Activated CD4-positive, alpha-beta T cell treated with anti-CD3 and anti-CD28 coated beads for 36 hours (primary cell): ENCODE measurements at regions of chr13 and their contacts with region 1.

Region 1: GRCh38 chr13:33542283-33543088 is 256.9 kb upstream of the STARD13 start:
- DNase-seq: peak; percentile 99
- ATAC-seq: peak; percentile 86
- H3K4me3 Mint-ChIP-seq: peak overlapping the region; percentile 82
- H3K27ac Mint-ChIP-seq: peak overlapping the region; percentile 99
- H3K4me1 Mint-ChIP-seq: peaks cover 55% of the 10 kb centered on the region
- H3K27me3 Mint-ChIP-seq: no peaks in the 10 kb centered on the region

Region 2: GRCh38 chr13:32310134-32310706 is 1232.3 kb before region 1 on chr13:
- CTCF ChIA-PET with region 1: no interaction called
- POLR2A ChIA-PET with region 1: no interaction called
- intact Hi-C with region 1: loop called (anchors 1 to 5 kb)
- DNase-seq: peak; percentile 32
- ATAC-seq: peak; percentile 70
- H3K4me3 Mint-ChIP-seq: no peak overlapping the region
- H3K27ac Mint-ChIP-seq: no peak overlapping the region
- H3K4me1 Mint-ChIP-seq: peaks cover 17% of the 10 kb centered on the region
- H3K27me3 Mint-ChIP-seq: no peaks in the 10 kb centered on the region

Region 3: DNA sequence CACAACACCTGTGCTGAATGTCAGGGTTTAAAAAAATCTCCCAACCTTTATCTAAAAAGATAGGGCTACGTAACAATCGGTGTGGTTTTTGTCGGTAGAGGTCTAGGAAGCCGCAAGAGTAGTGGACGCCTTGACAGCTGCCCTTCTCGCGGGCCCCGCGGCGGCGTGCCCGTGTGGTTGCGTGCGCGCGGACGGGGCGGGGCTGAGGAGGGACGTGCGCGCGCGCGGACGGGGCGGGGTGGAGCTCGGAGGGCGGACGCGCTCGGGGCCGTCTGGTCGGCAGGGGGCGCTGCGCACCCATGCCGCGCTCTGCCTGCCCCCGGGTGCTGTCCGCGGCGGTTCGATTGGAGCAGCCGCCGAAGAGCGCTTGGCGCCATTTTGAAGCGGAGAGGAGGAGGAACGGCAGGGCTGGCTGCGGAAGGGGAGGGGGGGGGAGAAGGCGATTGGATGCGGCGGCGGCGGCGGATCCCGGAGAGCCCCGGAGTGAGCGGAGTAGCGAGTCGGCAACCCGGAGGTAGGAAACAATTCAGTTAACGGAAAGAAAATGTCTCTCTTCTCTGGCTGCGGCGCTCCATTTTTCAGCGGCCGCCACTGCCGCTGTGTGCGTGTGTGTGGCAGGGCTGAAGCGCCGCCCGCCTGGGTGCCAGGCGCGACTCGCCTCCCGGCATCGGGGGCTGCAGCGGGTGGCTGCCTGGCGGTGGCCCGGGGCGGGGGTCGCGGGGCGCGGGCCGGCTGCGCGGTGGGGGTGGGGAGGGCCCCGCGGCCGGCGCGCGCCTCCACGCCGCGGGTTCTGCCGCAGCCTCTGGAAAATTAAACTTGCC is 956.2 kb before region 1 on chr13 and contains the start of gene PDS5B:
- CTCF ChIA-PET with region 1: interaction called, 5 read pairs
- POLR2A ChIA-PET with region 1: interaction called, 5 read pairs
- intact Hi-C with region 1: loop called (anchors 1 kb)
- DNase-seq: peak; percentile 96
- ATAC-seq: peak; percentile 93
- H3K4me3 Mint-ChIP-seq: peak within 1 kb of the TSS; percentile 92
- H3K27ac Mint-ChIP-seq: peak within 1 kb of the TSS; percentile 93
- H3K4me1 Mint-ChIP-seq: peaks cover 36% of the 10 kb centered on the region
- H3K27me3 Mint-ChIP-seq: peaks cover 3% of the 10 kb centered on the region
- total RNA-seq, gene PDS5B: 51.3 to 75.7 TPM

Region 4: DNA sequence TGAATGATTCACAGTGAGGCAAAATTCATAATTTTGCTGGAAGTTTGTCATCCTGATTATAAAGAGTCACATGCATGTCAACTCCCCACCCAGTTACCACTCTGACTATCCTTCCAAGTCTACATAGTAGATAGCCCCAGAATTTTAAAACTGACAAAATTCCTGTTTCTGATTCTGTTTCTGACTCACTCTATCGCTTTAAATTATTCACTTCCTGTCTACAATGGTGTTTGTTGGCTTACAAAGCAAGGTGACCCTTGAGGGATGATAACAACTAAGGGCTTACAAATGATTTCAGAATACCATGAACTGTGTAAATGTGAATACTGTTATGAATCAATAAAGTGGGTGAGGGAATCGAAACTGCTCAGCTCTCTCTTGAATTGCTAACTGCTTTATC is 625.0 kb before region 1 on chr13:
- CTCF ChIA-PET with region 1: no interaction called
- POLR2A ChIA-PET with region 1: no interaction called
- intact Hi-C with region 1: loop called in 1 of 2 experiments (anchors 5 kb)
- DNase-seq: peak; percentile 30
- ATAC-seq: peak; percentile 97
- H3K4me3 Mint-ChIP-seq: no peak overlapping the region
- H3K27ac Mint-ChIP-seq: peak overlapping the region; percentile 67
- H3K4me1 Mint-ChIP-seq: peaks cover 18% of the 10 kb centered on the region
- H3K27me3 Mint-ChIP-seq: peaks cover 7% of the 10 kb centered on the region

Region 5: DNA sequence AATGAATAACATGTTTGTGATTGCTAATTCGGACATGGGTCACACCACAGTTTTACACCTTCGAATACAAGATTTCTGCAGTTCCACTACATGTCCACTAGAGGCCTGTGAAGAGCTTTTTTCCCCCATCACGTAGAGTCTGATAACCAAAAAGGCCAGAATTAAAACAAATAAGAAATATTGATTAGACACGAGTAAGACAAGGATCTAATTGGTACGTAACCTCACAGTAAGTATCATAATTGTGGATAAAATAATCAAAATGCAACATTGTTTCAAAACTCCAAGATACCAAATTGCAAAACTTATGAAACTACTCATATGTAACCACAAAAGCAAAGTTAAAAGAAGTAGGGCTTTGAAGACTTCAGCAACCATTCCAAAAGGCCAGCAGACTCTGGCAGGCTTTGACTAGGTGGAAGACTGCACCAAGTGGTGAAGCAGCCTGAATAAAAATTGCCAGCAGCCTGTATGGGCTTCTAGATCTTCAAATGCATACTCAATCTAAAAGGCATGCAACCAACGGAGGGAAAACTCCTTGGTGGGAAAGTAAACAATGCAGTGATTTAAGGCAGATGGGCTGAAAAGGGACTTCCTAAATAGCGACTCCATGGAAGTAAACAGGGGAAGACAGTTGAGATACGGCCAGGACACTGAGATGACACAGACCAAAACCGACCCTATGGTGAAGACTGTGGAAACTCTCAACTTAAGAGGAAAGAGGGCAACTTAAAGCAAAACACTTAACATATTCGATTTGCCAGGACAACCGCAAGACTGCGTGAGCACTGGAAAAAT is 313.6 kb before region 1 on chr13:
- CTCF ChIA-PET with region 1: interaction called, 4 read pairs
- POLR2A ChIA-PET with region 1: no interaction called
- intact Hi-C with region 1: loop called (anchors 1 kb)
- DNase-seq: no peak
- ATAC-seq: peak; percentile 81
- H3K4me3 Mint-ChIP-seq: no peak overlapping the region
- H3K27ac Mint-ChIP-seq: peak overlapping the region; percentile 10
- H3K4me1 Mint-ChIP-seq: peaks cover 7% of the 10 kb centered on the region
- H3K27me3 Mint-ChIP-seq: peaks cover 6% of the 10 kb centered on the region

Region 6: DNA sequence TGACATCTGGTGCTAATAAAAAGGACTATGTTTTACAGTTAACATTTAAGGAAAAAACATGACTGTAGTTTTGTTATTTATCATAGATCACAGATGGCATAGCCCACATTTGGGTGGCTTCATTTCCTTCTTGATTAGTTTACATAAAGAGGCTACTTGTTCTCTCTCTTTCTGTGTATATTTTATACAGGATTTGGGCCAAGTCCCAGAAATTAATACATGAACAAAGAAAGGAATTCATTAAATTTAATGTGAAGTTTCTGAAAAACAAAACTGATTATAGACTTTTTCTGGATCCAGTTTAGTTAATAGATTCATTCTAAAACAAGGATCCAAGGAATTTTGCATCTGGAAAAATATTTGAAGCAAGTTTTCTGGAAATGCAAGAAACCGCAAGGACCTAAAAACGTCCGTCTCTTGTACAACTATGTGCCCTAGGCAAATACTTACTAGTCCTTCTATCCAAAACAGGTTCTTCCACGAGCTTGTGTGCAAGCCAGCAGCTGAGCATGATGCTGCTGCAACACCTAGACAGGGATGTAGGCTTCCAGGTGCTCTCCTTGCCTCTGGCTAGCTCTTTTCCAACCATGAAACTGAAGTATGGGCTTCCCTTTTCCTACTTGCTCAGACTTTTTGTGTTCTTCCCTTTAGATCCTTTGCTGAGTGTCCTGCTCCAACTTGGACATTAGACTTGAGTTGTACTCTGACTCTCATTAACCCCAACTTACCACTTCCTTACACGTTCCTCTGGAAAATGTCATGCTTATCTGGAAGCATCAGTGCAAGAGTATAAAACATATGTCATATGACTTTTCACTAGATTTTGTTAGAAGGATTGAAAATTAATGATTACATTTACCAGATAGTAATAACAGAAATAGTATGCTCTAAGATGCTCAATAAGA is 95.4 kb before region 1 on chr13:
- CTCF ChIA-PET with region 1: no interaction called
- POLR2A ChIA-PET with region 1: no interaction called
- intact Hi-C with region 1: no loop called
- DNase-seq: no peak
- ATAC-seq: no peak
- H3K4me3 Mint-ChIP-seq: no peak overlapping the region
- H3K27ac Mint-ChIP-seq: no peak overlapping the region
- H3K4me1 Mint-ChIP-seq: no peaks in the 10 kb centered on the region
- H3K27me3 Mint-ChIP-seq: peaks cover 4% of the 10 kb centered on the region

Region 7: DNA sequence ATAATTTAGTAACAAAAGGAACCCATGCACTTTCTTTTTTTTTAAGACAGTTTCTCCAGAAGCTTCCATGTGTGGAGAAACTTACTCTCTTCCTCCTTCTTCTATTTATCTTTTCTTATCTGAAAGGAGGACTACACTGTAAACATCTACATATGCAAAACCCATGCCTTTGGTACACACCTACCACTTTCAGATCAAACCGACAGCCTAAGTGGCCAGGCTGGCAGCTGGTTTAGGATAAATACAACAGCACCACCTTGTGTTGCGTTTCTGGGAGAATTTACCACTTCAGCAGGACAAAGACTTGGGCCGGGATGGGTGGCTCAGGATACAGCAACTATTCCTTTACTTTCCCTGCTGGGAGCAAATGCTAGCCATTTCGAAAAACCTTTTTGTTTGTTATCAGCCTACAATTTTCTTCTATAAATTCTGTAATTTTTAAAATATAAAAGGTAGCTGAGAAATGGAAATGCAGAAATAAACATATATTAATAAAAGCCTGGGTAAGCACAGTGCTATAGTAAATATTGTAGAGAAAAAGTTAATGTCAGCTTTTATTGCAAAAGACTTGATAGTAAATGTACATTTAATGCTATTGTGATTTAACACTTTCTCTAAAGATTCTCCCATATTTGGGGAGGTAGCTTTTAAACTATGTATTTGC is 181.4 kb after region 1 on chr13:
- CTCF ChIA-PET with region 1: interaction called, 30 read pairs
- POLR2A ChIA-PET with region 1: no interaction called
- intact Hi-C with region 1: loop called (anchors 1 kb)
- DNase-seq: peak; percentile 81
- ATAC-seq: peak; percentile 90
- H3K4me3 Mint-ChIP-seq: no peak overlapping the region
- H3K27ac Mint-ChIP-seq: peak overlapping the region; percentile 87
- H3K4me1 Mint-ChIP-seq: peaks cover 30% of the 10 kb centered on the region
- H3K27me3 Mint-ChIP-seq: no peaks in the 10 kb centered on the region